Activated B cell treated with CpG ODN at 0.5 μM for 24 hours (primary cell): ENCODE measurements at regions of chr5 and their contacts with region 1.

Region 1: GRCh38 chr5:132495667-132496190 is 5.2 kb upstream of the IRF1 start:
- DNase-seq: peak; percentile 79
- ATAC-seq: peak; percentile 63
- H3K4me3 Mint-ChIP-seq: peak overlapping the region; percentile 92
- H3K27ac Mint-ChIP-seq: peak overlapping the region; percentile 96
- H3K4me1 Mint-ChIP-seq: peaks cover 64% of the 10 kb centered on the region
- H3K27me3 Mint-ChIP-seq: no peaks in the 10 kb centered on the region
- CTCF ChIP-seq: no peak

Region 2: GRCh38 chr5:132180134-132180745 is 315.5 kb before region 1 on chr5:
- CTCF ChIA-PET with region 1: no interaction called
- POLR2A ChIA-PET with region 1: no interaction called
- intact Hi-C with region 1: loop called (anchors 5 kb)
- DNase-seq: no peak
- ATAC-seq: peak; percentile 36
- H3K4me3 Mint-ChIP-seq: no peak overlapping the region
- H3K27ac Mint-ChIP-seq: no peak overlapping the region
- H3K4me1 Mint-ChIP-seq: peaks cover 24% of the 10 kb centered on the region
- H3K27me3 Mint-ChIP-seq: no peaks in the 10 kb centered on the region
- CTCF ChIP-seq: no peak

Region 3: GRCh38 chr5:132394667-132395259 is 101.0 kb before region 1 on chr5:
- CTCF ChIA-PET with region 1: interaction called, 253 read pairs
- POLR2A ChIA-PET with region 1: interaction called, 27 read pairs
- intact Hi-C with region 1: no loop called
- DNase-seq: no peak
- ATAC-seq: peak; percentile 91
- H3K4me3 Mint-ChIP-seq: peak overlapping the region; percentile 59
- H3K27ac Mint-ChIP-seq: peak overlapping the region; percentile 65
- H3K4me1 Mint-ChIP-seq: peaks cover 29% of the 10 kb centered on the region
- H3K27me3 Mint-ChIP-seq: no peaks in the 10 kb centered on the region
- CTCF ChIP-seq: no peak

Region 4: DNA sequence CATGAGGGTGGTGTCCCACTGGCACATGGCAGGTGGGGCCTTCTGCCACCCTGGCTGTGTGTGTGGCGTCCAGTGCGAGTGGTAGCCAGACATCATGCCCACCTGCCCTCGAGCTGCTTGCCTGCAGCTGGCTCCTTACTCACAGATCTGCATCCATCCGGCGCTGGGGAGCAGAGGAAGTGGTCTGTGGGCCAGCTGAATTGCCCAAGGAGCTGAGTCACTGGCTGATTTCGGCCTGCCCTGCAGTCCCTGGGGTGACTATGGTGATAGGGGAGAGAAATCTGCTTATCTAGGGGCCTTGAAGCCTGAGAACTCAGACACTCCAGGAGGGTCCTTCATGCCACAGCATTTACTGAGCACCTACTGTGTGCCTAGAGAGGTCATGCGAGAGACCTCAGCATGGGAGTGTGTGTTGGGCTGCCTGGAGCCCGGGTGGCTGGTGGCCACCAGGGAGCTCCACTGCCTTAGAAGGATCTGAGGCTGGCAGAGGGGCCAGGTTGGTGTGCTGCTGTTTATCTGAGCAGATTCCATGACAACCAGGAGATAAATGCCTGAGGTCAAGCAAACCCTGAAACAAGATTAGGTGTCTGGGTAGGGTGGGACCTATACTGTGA is 69.1 kb before region 1 on chr5:
- CTCF ChIA-PET with region 1: interaction called, 47 read pairs
- POLR2A ChIA-PET with region 1: interaction called, 461 read pairs
- intact Hi-C with region 1: loop called (anchors 1 kb)
- DNase-seq: peak; percentile 60
- ATAC-seq: peak; percentile 44
- H3K4me3 Mint-ChIP-seq: peak overlapping the region; percentile 62
- H3K27ac Mint-ChIP-seq: peak overlapping the region; percentile 91
- H3K4me1 Mint-ChIP-seq: peaks cover 100% of the 10 kb centered on the region
- H3K27me3 Mint-ChIP-seq: no peaks in the 10 kb centered on the region
- CTCF ChIP-seq: no peak

Region 5: DNA sequence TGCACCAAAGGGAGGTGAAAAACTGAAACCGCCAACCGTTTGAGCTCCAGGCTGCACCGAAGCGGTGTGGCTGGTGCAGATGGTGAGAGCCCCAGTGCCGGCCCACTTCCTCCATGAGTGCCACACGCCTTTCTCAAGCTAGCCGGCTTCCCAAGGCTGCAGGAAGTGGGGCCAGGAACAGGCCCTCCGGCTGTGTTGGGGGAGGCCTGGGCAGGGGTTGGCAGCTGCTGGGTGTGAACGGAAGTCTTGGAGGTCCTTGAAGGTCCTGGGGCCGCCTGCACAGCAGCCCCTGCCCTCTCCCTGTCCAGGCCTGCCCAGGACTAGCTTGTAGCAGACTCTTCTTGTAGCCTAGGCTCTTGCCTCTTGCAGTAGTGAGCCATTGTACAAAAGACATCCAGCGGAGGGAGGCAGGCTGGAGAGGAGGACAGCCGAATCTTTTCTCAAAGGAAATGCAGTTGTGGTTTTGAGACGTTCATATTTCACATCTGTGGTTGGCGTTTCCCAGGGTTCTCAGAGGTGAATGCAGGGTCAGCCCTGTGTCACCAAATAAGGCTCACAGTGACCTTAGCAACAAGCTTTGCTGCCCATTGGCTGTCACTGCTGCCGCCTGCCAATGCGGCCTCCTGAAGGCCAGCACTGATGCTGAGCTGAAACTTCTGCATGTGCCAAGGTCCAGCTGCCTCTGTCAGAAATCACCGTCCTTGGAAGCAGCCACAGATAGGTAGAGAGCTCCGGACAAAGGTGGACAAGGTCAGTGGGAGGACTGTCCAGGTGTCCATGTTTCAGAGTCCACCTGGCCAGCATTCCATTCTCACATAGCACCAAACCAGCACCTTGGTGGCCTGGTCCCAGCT is 29.1 kb before region 1 on chr5:
- CTCF ChIA-PET with region 1: interaction called, 7 read pairs
- POLR2A ChIA-PET with region 1: interaction called, 286 read pairs
- intact Hi-C with region 1: loop called (anchors 5 kb)
- DNase-seq: peak; percentile 44
- ATAC-seq: peak; percentile 64
- H3K4me3 Mint-ChIP-seq: peak overlapping the region; percentile 55
- H3K27ac Mint-ChIP-seq: peak overlapping the region; percentile 54
- H3K4me1 Mint-ChIP-seq: peaks cover 92% of the 10 kb centered on the region
- H3K27me3 Mint-ChIP-seq: no peaks in the 10 kb centered on the region
- CTCF ChIP-seq: no peak

Region 6: DNA sequence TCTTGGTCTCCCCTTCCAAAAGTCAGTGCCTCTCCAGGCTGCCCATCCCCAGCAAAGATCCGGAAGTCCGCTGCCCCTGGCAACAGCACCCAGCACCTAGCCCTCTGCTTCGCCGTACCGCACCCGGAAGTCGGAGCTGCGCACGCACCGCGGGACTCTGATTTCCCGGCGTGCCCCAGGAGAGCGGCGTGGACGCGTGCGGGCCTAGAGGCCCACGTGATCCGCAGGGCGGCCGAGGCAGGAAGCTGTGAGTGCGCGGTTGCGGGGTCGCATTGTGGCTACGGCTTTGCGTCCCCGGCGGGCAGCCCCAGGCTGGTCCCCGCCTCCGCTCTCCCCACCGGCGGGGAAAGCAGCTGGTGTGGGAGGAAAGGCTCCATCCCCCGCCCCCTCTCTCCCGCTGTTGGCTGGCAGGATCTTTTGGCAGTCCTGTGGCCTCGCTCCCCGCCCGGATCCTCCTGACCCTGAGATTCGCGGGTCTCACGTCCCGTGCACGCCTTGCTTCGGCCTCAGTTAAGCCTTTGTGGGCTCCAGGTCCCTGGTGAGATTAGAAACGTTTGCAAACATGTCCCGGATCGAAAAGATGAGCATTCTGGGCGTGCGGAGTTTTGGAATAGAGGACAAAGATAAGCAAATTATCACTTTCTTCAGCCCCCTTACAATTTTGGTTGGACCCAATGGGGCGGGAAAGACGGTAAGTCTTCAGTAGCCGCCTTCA is 61.2 kb after region 1 on chr5 and contains the start of gene RAD50:
- CTCF ChIA-PET with region 1: no interaction called
- POLR2A ChIA-PET with region 1: interaction called, 17 read pairs
- intact Hi-C with region 1: loop called (anchors 2 kb)
- DNase-seq: peak; percentile 89
- ATAC-seq: peak; percentile 97
- H3K4me3 Mint-ChIP-seq: peak within 1 kb of the TSS; percentile 97
- H3K27ac Mint-ChIP-seq: peak within 1 kb of the TSS; percentile 94
- H3K4me1 Mint-ChIP-seq: peaks cover 28% of the 10 kb centered on the region
- H3K27me3 Mint-ChIP-seq: no peaks in the 10 kb centered on the region
- CTCF ChIP-seq: no peak
- total RNA-seq, gene RAD50: 42.5 and 42.6 TPM in 2 replicates

Region 7: DNA sequence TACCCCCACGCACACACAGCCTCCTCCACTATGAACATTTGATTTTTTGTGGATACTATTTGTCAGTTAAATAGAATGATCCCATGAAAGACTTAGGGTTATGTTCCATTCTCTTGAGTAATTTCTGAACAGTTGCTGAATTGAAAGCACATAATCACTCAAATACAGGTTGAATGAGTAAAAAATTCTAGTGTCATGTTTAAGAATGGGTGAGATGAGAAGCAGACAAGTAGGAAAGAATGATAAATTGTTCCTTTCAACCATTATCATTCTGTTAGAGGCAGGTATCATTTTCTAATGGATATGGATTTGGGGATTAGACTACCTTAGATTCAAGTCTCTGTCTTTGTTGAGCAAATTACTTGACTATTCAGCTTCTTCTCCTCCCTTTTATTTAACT is 80.4 kb after region 1 on chr5:
- CTCF ChIA-PET with region 1: no interaction called
- POLR2A ChIA-PET with region 1: no interaction called
- intact Hi-C with region 1: no loop called
- DNase-seq: no peak
- ATAC-seq: no peak
- H3K4me3 Mint-ChIP-seq: no peak overlapping the region
- H3K27ac Mint-ChIP-seq: no peak overlapping the region
- H3K4me1 Mint-ChIP-seq: peaks cover 2% of the 10 kb centered on the region
- H3K27me3 Mint-ChIP-seq: no peaks in the 10 kb centered on the region
- CTCF ChIP-seq: no peak